ENCODE measurements at regions of chr10 and their contacts with region 1.

Region 1: GRCh38 chr10:100346765-100347567 is at the start of gene SCD:
- DNase-seq: peak; percentile 54
- H3K4me3 ChIP-seq: peak within 1 kb of the TSS; percentile 84
- CTCF ChIP-seq: no peak

Region 2: GRCh38 chr10:100327007-100327717 is 19.8 kb before region 1 on chr10:
- CTCF ChIA-PET with region 1: interaction called, 138 read pairs
- POLR2A ChIA-PET with region 1: no interaction called
- DNase-seq: no peak
- H3K4me3 ChIP-seq: no peak overlapping the region
- CTCF ChIP-seq: no peak

Region 3: DNA sequence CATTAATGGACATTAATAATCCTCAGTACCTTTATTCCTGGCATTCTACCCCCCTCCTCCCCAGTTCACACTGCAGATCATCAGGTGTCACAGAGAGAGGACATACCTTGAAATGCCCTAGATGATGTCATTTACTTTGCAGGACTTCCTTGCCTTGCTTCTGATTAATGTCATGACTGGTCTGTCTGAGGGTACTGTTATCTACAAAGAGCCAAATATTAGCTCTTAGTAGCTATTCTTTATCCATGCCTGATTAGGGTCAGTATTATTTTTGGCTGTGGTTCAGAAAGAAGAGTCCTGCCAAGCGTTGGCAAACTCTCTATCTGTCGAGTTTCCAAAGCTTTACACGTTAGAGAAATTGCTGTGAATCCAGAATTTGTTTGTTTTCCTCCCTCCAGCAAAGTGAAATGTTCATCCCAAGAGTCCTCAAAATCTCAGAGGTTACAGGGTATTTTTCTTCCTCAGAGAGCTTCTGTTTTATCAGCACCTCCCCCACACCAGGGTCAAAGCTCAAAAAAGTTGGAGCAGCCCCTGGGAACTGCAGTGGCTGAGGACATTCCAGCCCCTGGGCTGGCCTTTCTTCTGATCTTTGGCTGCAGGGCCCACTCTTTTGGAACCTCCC is 12.7 kb after region 1 on chr10:
- CTCF ChIA-PET with region 1: interaction called, 13 read pairs
- POLR2A ChIA-PET with region 1: interaction called, 3 read pairs
- DNase-seq: no peak
- H3K4me3 ChIP-seq: no peak overlapping the region
- CTCF ChIP-seq: no peak

Region 4: GRCh38 chr10:100373298-100374136 is 26.6 kb after region 1 on chr10:
- CTCF ChIA-PET with region 1: interaction called, 4 read pairs
- POLR2A ChIA-PET with region 1: interaction called, 18 read pairs
- DNase-seq: peak; percentile 99
- H3K4me3 ChIP-seq: peak overlapping the region; percentile 67
- CTCF ChIP-seq: no peak

Measured in AG04449 (cell line).